ENCODE measurements at regions of chr18 and their contacts with region 1.

Region 1: DNA sequence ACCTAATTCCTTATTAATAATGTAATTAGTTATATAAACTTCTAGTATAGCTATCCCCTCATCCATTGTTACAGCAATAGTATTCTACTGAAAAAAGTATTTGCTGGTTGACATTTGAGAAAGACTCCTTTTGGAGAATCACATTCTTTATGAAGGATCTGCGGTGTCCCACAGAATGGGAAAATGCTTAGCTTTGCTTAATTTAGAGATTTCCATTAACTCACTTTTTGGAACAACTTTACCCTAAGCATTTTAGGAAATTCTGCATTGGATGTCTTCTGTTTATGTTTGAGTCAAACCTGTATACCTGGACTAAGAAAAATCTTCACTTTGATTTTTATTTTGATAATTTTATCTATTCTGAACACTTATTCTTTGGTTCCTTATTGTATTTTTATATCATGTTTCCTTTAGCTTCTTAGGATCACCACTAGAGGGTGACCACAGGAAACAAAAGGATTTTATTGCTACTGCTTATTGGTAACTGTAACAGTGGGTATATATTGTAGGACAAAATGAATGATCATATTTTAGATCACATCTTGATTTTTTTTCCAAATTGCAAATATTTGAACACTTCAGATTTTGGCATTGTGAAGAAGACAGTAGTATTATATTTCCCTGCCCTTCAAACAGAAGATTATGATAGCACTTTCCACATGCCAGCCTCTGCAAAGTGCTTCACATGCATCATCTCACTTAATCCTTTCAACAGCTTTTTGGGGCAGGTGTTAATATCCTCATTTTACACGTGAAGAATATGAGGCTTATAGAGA is 79.6 kb downstream of the MIB1 start:
- H3K4me3 ChIP-seq: no peak overlapping the region
- H3K27ac ChIP-seq: no peak overlapping the region
- H3K4me1 ChIP-seq: no peaks in the 10 kb centered on the region
- CTCF ChIP-seq: no peak

Region 2: DNA sequence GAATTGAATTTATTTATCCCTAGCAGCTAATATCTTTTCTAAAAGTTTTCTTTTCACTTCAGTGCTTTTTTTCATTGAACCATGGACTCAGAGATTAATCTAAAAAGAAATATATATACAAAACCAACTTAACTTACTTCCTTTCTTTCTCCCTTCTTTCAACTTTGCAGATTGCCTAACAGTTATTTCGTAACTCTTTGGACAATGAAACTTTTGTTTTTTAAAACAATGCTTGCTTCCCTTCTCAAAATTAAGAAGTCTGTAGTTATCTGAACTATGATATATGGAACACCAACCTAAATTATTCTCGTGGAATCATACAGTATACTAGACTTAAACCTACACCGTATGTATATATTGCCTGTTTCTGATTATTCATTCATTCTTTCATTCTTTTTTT is 16.7 kb before region 1 on chr18:
- CTCF ChIA-PET with region 1: interaction called, 14 read pairs
- POLR2A ChIA-PET with region 1: no interaction called
- H3K4me3 ChIP-seq: no peak overlapping the region
- H3K27ac ChIP-seq: no peak overlapping the region
- H3K4me1 ChIP-seq: no peaks in the 10 kb centered on the region
- CTCF ChIP-seq: no peak

Region 3: DNA sequence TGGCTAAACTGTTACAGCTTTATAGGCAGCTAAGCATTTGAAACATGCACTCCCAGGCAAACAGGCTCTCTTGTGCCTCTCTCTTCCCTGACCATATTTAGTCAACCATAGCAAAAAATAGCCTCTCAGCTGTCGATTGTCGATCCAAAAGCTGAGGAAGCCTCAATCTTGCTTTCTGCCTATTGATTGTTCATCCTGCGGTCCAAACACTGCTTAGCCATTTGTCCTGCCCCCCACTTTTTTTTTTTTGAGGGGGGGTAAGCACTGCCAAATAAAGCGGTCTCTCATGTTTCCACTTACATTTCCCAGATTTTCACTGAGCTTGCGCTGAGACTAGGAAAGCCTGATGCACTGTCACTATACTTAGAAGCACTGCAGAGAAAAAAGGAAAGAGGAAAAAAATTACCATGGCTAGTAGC is 11.2 kb after region 1 on chr18:
- CTCF ChIA-PET with region 1: interaction called, 32 read pairs
- POLR2A ChIA-PET with region 1: no interaction called
- H3K4me3 ChIP-seq: no peak overlapping the region
- H3K27ac ChIP-seq: no peak overlapping the region
- H3K4me1 ChIP-seq: no peaks in the 10 kb centered on the region
- CTCF ChIP-seq: no peak

Region 4: DNA sequence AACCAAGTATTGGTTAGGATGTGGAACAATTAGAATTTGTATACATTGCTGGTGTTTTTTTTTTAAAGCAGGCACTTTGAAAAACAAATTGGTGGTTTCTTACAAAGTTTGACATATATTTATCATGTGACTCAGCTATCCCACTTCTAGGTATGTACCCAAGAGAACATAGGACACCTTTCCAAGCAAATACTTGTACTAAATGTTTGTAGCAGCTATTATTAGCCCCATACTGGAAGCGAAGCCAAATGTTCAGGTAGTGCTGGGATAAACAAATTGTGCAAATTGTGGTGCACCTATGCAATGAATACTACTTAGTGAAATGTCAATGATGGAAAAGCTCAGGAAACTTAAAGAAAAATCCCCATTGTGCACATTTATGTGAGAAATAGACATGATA is 21.3 kb after region 1 on chr18:
- CTCF ChIA-PET with region 1: interaction called, 10 read pairs
- POLR2A ChIA-PET with region 1: no interaction called
- H3K4me3 ChIP-seq: no peak overlapping the region
- H3K27ac ChIP-seq: no peak overlapping the region
- H3K4me1 ChIP-seq: no peaks in the 10 kb centered on the region
- CTCF ChIP-seq: no peak

Region 5: DNA sequence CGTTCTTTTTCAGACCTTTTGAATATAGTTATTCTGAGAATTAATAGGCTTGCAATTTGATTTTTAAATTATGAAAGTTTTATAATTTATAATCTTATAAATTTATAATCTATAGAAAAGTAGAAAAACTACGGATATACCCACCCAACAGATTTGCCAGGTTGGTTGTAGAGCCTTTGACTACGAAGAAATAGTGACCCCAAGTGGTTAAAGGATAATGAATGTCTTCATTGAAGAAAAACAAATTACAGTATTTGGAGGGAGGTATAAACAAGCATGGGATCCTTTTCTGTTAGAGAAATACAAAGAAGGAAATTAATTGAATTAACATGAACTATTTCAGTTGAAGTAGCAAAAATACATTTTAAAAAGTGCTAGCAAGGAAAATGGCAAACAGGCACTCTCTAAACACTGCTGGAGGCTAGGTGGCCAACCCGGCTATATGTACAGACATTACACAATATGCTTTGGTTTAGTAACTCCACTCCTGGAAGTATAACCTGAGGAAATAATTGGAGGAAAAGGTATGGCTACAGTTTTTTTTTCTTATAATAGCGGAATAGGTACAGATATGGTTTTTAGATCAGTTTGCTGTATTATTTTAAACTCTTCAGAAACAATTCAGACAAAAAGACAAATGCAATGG is 31.2 kb after region 1 on chr18:
- CTCF ChIA-PET with region 1: interaction called, 11 read pairs
- POLR2A ChIA-PET with region 1: no interaction called
- H3K4me3 ChIP-seq: no peak overlapping the region
- H3K27ac ChIP-seq: no peak overlapping the region
- H3K4me1 ChIP-seq: no peaks in the 10 kb centered on the region
- CTCF ChIP-seq: no peak

Region 6: GRCh38 chr18:22207021-22207758 is 387.0 kb after region 1 on chr18:
- CTCF ChIA-PET with region 1: no interaction called
- POLR2A ChIA-PET with region 1: no interaction called
- H3K4me3 ChIP-seq: no peak overlapping the region
- H3K27ac ChIP-seq: no peak overlapping the region
- H3K4me1 ChIP-seq: no peaks in the 10 kb centered on the region
- CTCF ChIP-seq: no peak